Activated T-helper 2 cell treated with anti-CD3 and anti-CD28 coated beads, Interferon-gamma antibody, Interleukin-2, Interleukin-4, amounts not matched to agents 10 μg/mL and 5 μg/mL and 100 μg/mL, durations not matched to agents 14 hours and 24 hours and 36 hours (primary cell): ENCODE measurements at regions of chr3 and their contacts with region 1.

Region 1: GRCh38 chr3:129439817-129440617 is at the starts of genes IFT122 and MBD4:
- DNase-seq: peak; percentile 100
- H3K4me3 Mint-ChIP-seq: peak within 1 kb of the TSS; percentile 92
- H3K27ac Mint-ChIP-seq: peak within 1 kb of the TSS; percentile 99
- H3K4me1 Mint-ChIP-seq: peaks cover 54% of the 10 kb centered on the region
- H3K27me3 Mint-ChIP-seq: no peaks in the 10 kb centered on the region
- total RNA-seq, gene IFT122: 15.7 and 17.6 TPM in 2 replicates
- total RNA-seq, gene MBD4: 41.9 and 45.9 TPM in 2 replicates

Region 2: GRCh38 chr3:129278439-129278970 is 161.5 kb before region 1 on chr3 and contains the start of gene HMCES:
- intact Hi-C with region 1: loop called (anchors 2 kb)
- DNase-seq: peak; percentile 93
- H3K4me3 Mint-ChIP-seq: peak within 1 kb of the TSS; percentile 98
- H3K27ac Mint-ChIP-seq: peak within 1 kb of the TSS; percentile 96
- H3K4me1 Mint-ChIP-seq: peaks cover 42% of the 10 kb centered on the region
- H3K27me3 Mint-ChIP-seq: no peaks in the 10 kb centered on the region
- total RNA-seq, gene HMCES: 63.6 and 70.7 TPM in 2 replicates

Region 3: DNA sequence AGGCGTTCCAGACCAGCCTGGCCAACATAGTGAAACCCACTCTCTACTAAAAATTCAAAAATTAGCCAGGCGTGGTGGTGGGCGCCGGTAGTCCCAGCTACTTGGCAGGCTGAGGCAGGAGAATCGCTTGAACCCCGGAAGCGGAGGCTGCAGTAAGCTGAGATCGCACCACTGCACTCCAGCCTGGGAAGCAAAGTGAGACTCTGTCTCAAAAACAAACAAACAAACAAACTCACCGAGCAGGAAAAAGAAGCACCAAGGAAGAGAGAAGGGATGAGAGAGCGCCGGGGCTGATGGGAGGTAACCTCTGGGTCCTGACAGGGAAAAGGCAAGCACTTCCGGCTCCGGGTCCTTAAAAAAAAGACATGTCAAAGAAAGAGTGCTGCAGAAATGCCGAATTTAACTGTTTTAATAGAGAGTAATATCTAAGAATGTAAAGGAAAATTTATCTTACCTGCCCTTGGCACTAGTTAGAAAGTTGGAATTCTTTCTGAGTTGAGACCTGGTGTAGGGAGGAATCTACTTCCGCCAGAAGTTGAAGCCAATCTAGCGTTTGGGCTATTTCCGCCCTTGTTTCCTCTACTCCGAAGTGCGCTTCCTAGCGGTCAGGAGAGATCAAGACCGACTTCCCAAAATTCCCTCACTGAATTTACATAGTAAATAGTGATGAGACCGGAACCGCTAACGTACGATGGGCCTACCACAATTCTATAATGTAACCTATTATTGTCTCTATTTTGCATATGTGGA is 40.7 kb before region 1 on chr3:
- intact Hi-C with region 1: loop called (anchors 1 kb)
- DNase-seq: peak; percentile 68
- H3K4me3 Mint-ChIP-seq: peak overlapping the region; percentile 100
- H3K27ac Mint-ChIP-seq: peak overlapping the region; percentile 98
- H3K4me1 Mint-ChIP-seq: peaks cover 27% of the 10 kb centered on the region
- H3K27me3 Mint-ChIP-seq: no peaks in the 10 kb centered on the region

Region 4: DNA sequence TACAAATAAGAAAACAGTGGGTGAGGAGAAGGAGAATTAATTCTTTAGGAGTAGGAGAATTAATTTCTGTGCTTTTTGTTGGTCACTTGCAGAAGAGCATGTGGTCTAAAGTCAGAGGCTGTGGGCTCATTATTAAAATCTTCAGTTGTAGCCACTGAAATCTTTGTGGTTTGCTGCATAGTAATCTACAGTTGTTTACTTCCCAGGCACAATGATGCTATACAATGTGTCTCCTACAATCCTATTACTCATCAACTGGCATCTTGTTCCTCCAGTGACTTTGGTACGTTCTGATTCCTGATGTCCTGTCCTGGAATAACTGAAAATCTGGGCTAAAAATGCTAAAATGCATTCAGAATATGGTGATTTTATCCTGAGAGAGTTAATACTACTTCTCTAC is 21.0 kb after region 1 on chr3:
- intact Hi-C with region 1: loop called (anchors 2 kb)
- DNase-seq: no peak
- H3K4me3 Mint-ChIP-seq: no peak overlapping the region
- H3K27ac Mint-ChIP-seq: peak overlapping the region; percentile 74
- H3K4me1 Mint-ChIP-seq: peaks cover 19% of the 10 kb centered on the region
- H3K27me3 Mint-ChIP-seq: no peaks in the 10 kb centered on the region

Region 5: GRCh38 chr3:129481766-129482332 is 41.8 kb after region 1 on chr3:
- intact Hi-C with region 1: no loop called
- DNase-seq: no peak
- H3K4me3 Mint-ChIP-seq: no peak overlapping the region
- H3K27ac Mint-ChIP-seq: peak overlapping the region; percentile 60
- H3K4me1 Mint-ChIP-seq: peaks cover 8% of the 10 kb centered on the region
- H3K27me3 Mint-ChIP-seq: no peaks in the 10 kb centered on the region